ENCODE measurements at regions of chr1 and their contacts with region 1.

Region 1: GRCh38 chr1:156728597-156729462 is at the start of gene ISG20L2:
- DNase-seq: peak; percentile 91 to 93
- H3K4me3 ChIP-seq: peak within 1 kb of the TSS; percentile 83 to 100 (median 94)
- H3K27ac ChIP-seq: peak within 1 kb of the TSS; percentile 89
- H3K4me1 ChIP-seq: peaks cover 0 to 23% (median 18%) of the 10 kb centered on the region in 4 experiments; a peak in 6 of 7 replicates
- H3K27me3 ChIP-seq: no peaks in the 10 kb centered on the region
- CTCF ChIP-seq: no peak
- EP300 ChIP-seq: no peak
- POLR2A ChIP-seq: peak; percentile 91 to 92
- RAD21 ChIP-seq: no peak
- total RNA-seq, gene ISG20L2: 47.5 and 53.1 TPM in 2 replicates

Region 2: GRCh38 chr1:156659994-156660751 is 68.7 kb before region 1 on chr1:
- CTCF ChIA-PET with region 1: interaction called, 4,284 read pairs
- POLR2A ChIA-PET with region 1: interaction called, 8 read pairs
- DNase-seq: peak; percentile 96 to 100
- H3K4me3 ChIP-seq: no peak overlapping the region
- H3K27ac ChIP-seq: peak overlapping the region; percentile 54; the same call in 1 of the 2 replicates
- H3K4me1 ChIP-seq: peaks cover 19 to 49% (median 43%) of the 10 kb centered on the region in 4 experiments
- H3K27me3 ChIP-seq: peaks cover 2 to 44% (median 33%) of the 10 kb centered on the region in 4 experiments
- CTCF ChIP-seq: peak in 2 of 3 experiments; percentile 97 to 99; a peak in 3 of 4 replicates
- EP300 ChIP-seq: peak in 1 of 2 experiments; percentile 71; a peak in 1 of 3 replicates
- POLR2A ChIP-seq: peak in 1 of 2 experiments; percentile 30; a peak in 1 of 3 replicates
- RAD21 ChIP-seq: peak; percentile 87 to 96

Region 3: DNA sequence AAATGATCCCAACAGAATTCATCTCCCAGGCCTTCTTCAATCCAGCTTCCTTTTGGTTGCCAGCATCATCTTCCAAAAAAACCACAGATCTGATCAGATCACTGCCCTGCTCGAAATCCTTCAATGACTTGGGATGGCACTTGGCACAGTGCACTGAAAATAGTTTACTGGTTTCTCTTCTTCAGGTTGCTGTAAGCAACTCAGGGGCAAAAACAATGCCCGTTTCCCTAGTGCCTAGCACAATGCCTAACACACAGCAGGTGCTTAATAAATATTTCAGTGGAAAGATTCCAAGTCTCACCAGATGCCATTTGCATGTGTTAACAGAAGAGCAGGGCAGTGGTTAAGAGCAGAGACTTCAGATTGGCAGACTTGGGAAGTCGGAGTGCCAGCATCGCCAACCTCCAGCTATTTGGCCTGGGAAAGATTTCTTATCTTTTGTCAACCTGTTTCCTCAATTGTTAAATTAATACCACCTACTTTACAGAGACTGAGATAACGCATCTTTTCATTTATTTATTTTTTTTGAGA is 11.5 kb before region 1 on chr1:
- CTCF ChIA-PET with region 1: interaction called, 4,284 read pairs
- POLR2A ChIA-PET with region 1: interaction called, 30 read pairs
- DNase-seq: no peak
- H3K4me3 ChIP-seq: no peak overlapping the region
- H3K27ac ChIP-seq: no peak overlapping the region
- H3K4me1 ChIP-seq: peaks cover 2 to 8% (median 4%) of the 10 kb centered on the region in 4 experiments; a peak in 4 of 7 replicates
- H3K27me3 ChIP-seq: no peaks in the 10 kb centered on the region
- CTCF ChIP-seq: no peak
- EP300 ChIP-seq: no peak
- POLR2A ChIP-seq: no peak
- RAD21 ChIP-seq: no peak

Region 4: GRCh38 chr1:156760097-156760803 is 31.4 kb after region 1 on chr1:
- CTCF ChIA-PET with region 1: interaction called, 100 read pairs
- POLR2A ChIA-PET with region 1: interaction called, 69 read pairs
- DNase-seq: no peak
- H3K4me3 ChIP-seq: no peak overlapping the region
- H3K27ac ChIP-seq: no peak overlapping the region
- H3K4me1 ChIP-seq: peaks cover 0 to 5% (median 0%) of the 10 kb centered on the region in 4 experiments; a peak in 3 of 7 replicates
- H3K27me3 ChIP-seq: no peaks in the 10 kb centered on the region
- CTCF ChIP-seq: no peak
- EP300 ChIP-seq: no peak
- POLR2A ChIP-seq: no peak
- RAD21 ChIP-seq: no peak

Region 5: GRCh38 chr1:156797212-156797871 is 68.5 kb after region 1 on chr1:
- CTCF ChIA-PET with region 1: interaction called, 79 read pairs
- POLR2A ChIA-PET with region 1: interaction called, 3 read pairs
- DNase-seq: no peak
- H3K4me3 ChIP-seq: no peak overlapping the region
- H3K27ac ChIP-seq: no peak overlapping the region
- H3K4me1 ChIP-seq: no peaks in the 10 kb centered on the region
- H3K27me3 ChIP-seq: no peaks in the 10 kb centered on the region
- CTCF ChIP-seq: peak in 2 of 3 experiments; percentile 84 to 85; a peak in 3 of 4 replicates
- EP300 ChIP-seq: no peak
- POLR2A ChIP-seq: no peak
- RAD21 ChIP-seq: peak; percentile 81 to 83

Region 6: GRCh38 chr1:156898161-156898566 is 169.3 kb after region 1 on chr1:
- CTCF ChIA-PET with region 1: interaction called, 6 read pairs
- POLR2A ChIA-PET with region 1: interaction called, 10 read pairs
- DNase-seq: no peak
- H3K4me3 ChIP-seq: no peak overlapping the region
- H3K27ac ChIP-seq: no peak overlapping the region
- H3K4me1 ChIP-seq: peaks cover 0 to 9% (median 2%) of the 10 kb centered on the region in 4 experiments; a peak in 5 of 7 replicates
- H3K27me3 ChIP-seq: peaks cover 2 to 24% (median 21%) of the 10 kb centered on the region in 4 experiments
- CTCF ChIP-seq: no peak
- EP300 ChIP-seq: no peak
- POLR2A ChIP-seq: no peak
- RAD21 ChIP-seq: no peak